CD4-positive, alpha-beta memory T cell (primary cell): ENCODE measurements at regions of chr14 and their contacts with region 1.

Region 1: DNA sequence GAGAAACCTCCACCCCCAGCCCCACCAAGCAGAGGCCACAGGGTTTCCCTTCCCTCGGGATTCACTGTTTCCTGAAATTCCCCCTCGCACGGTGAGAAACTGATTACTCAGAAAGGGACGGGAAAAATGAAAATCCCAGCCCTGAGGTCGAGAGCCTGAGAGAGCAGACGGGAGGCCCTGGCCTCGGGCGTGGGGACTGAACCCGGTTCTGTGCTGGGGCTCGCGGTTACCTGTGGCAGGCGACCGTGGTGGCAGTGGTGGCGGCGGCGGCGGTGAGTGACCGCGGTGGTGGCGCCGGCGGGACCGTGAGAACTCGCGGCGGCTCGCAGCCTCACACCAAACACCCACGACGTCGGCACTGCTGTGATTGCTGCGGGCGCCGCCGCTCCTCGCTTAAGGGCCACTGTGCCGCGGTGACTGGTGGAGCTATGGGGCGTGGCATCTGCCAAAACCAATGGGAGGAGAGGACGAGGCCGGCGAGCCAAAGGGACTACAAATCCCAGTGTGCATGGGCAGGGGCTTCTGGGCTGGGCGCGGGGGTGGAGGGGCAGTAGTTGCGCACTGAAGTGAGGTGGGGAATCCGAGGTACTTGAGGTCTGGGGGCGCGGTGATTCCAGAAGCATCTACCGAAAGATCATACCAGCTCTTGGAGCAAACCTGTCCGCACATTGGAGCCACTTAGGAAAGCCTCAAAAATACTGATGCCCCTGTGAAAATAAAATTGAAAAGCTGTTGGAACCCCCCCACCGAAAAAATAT is at the start of gene LGMN:
- DNase-seq: peak; percentile 76 to 86 (median 80)
- H3K4me3 ChIP-seq: peak within 1 kb of the TSS; percentile 55 to 76
- H3K4me3 Mint-ChIP-seq: peak within 1 kb of the TSS; percentile 85 to 94 (median 88)
- H3K27ac ChIP-seq: no peak within 1 kb of the TSS
- H3K27ac Mint-ChIP-seq: peak within 1 kb of the TSS; percentile 54 to 82 (median 72)
- H3K4me1 ChIP-seq: peaks cover 21% of the 10 kb centered on the region
- H3K4me1 Mint-ChIP-seq: peaks cover 20 to 41% (median 31%) of the 10 kb centered on the region in 4 donors
- H3K27me3 ChIP-seq: no peaks in the 10 kb centered on the region
- H3K27me3 Mint-ChIP-seq: peaks cover 5 to 19% of the 10 kb centered on the region in 2 donors
- total RNA-seq, gene LGMN: 14.0 TPM

Region 2: DNA sequence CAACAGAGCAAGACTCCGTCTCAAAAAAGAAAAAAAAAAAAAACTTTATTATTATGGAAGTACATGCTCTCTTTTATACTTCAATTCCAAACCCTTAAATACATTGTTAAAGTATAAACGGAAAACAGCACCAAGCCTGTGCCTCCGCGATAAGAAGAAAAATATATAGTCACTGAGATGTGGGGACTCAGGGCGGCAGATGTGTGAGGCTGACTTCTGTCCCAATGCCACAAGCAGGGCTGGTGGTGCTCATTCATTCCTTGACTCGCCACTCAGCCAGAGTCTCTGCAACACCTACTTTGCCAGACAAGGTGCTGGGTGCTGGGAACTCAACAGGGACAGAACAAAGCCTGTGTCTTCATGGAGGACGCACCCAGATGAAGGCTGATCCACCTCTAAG is 13.8 kb before region 1 on chr14:
- CTCF ChIA-PET with region 1: no interaction called
- POLR2A ChIA-PET with region 1: no interaction called
- intact Hi-C with region 1: no loop called
- DNase-seq: no peak
- H3K4me3 ChIP-seq: no peak overlapping the region
- H3K4me3 Mint-ChIP-seq: no peak overlapping the region
- H3K27ac ChIP-seq: no peak overlapping the region
- H3K27ac Mint-ChIP-seq: no peak overlapping the region
- H3K4me1 ChIP-seq: no peaks in the 10 kb centered on the region
- H3K4me1 Mint-ChIP-seq: peaks cover 1 to 6% (median 4%) of the 10 kb centered on the region in 4 donors
- H3K27me3 ChIP-seq: no peaks in the 10 kb centered on the region
- H3K27me3 Mint-ChIP-seq: peaks cover 0 to 3% of the 10 kb centered on the region in 2 donors

Region 3: GRCh38 chr14:92793709-92794546 is 45.5 kb after region 1 on chr14 and contains the start of gene GOLGA5:
- CTCF ChIA-PET with region 1: no interaction called
- POLR2A ChIA-PET with region 1: interaction called, 17 read pairs
- intact Hi-C with region 1: loop called (anchors 1 kb)
- DNase-seq: peak; percentile 97 to 100 (median 99)
- H3K4me3 ChIP-seq: peak within 1 kb of the TSS; percentile 67 to 94
- H3K4me3 Mint-ChIP-seq: peak within 1 kb of the TSS; percentile 84 to 98 (median 96)
- H3K27ac ChIP-seq: peak within 1 kb of the TSS; percentile 85
- H3K27ac Mint-ChIP-seq: peak within 1 kb of the TSS; percentile 77 to 98 (median 95)
- H3K4me1 ChIP-seq: peaks cover 30% of the 10 kb centered on the region
- H3K4me1 Mint-ChIP-seq: peaks cover 26 to 46% (median 35%) of the 10 kb centered on the region in 4 donors
- H3K27me3 ChIP-seq: no peaks in the 10 kb centered on the region
- H3K27me3 Mint-ChIP-seq: no peaks in the 10 kb centered on the region
- total RNA-seq, gene GOLGA5: 27.4 to 29.8 TPM

Region 4: DNA sequence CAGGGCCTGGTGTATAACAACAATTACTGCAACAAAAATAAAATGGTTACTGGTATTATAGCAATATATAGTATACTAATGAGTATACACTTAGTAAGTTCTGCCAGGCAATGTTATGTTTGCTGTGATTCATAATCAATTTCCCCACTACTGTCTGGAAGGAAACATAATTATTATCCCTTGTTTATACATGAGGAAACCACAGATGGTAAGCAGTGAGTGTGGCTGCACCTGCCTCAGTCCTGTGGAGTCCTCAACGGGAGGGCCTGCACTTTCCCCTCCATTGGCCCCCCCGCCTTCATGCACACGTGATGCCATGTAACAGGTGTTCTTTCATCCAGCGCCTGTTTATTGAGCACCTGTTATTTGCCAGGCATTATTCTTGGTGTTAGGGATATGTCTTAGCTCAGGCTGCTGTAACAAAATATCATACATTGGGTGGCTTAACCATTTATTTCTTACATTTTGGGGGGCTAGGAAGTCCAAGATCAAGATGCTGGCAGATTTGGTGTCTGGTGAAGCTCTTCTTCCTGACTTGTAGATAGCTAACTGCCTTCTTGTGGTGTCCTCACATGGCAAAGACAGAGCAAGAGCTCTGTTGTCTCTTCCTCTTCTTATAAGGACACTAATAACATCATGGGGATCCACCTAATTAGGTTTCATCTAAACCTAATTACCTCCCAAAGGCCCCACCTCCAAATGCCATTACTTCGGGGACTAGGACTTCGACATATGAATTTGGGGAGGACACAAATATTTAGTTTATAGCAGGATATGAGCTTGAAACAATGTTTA is 115.0 kb after region 1 on chr14:
- CTCF ChIA-PET with region 1: no interaction called
- POLR2A ChIA-PET with region 1: no interaction called
- intact Hi-C with region 1: no loop called
- DNase-seq: no peak
- H3K4me3 ChIP-seq: no peak overlapping the region
- H3K4me3 Mint-ChIP-seq: no peak overlapping the region
- H3K27ac ChIP-seq: no peak overlapping the region
- H3K27ac Mint-ChIP-seq: no peak overlapping the region
- H3K4me1 ChIP-seq: no peaks in the 10 kb centered on the region
- H3K4me1 Mint-ChIP-seq: no peaks in the 10 kb centered on the region
- H3K27me3 ChIP-seq: no peaks in the 10 kb centered on the region
- H3K27me3 Mint-ChIP-seq: peaks cover 11 to 15% of the 10 kb centered on the region in 2 donors

Region 5: GRCh38 chr14:93295541-93296220 is 547.2 kb after region 1 on chr14:
- CTCF ChIA-PET with region 1: no interaction called
- POLR2A ChIA-PET with region 1: no interaction called
- intact Hi-C with region 1: no loop called
- DNase-seq: no peak
- H3K4me3 ChIP-seq: no peak overlapping the region
- H3K4me3 Mint-ChIP-seq: no peak overlapping the region
- H3K27ac ChIP-seq: no peak overlapping the region
- H3K27ac Mint-ChIP-seq: no peak overlapping the region
- H3K4me1 ChIP-seq: peaks cover 19% of the 10 kb centered on the region
- H3K4me1 Mint-ChIP-seq: peaks cover 17 to 40% (median 28%) of the 10 kb centered on the region in 4 donors
- H3K27me3 ChIP-seq: no peaks in the 10 kb centered on the region
- H3K27me3 Mint-ChIP-seq: no peaks in the 10 kb centered on the region